ENCODE measurements at regions of chr4 and their contacts with region 1.

Region 1: DNA sequence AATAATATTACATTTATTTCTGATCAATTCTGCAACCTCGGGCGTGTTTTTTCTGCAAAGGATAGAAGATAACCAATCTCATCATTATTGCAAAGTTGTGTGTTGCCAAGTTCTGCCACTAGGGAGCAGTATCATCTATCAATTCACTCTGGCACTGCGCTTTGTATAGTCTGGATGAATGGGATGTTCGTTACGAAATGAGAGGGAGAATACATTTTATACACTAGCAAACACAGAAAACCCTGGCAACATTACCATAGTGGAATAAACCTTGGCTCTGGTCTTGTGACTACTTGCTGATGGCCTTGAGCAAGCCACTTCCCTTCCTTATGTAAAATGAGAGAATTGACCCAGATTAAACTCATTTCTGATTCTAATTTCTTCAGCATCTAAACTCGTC is 97.5 kb upstream of the ZNF518B start:
- DNase-seq: peak in 4 of 5 donors; percentile 28 to 54 (median 38)
- H3K4me3 ChIP-seq: no peak overlapping the region
- H3K27ac ChIP-seq: no peak overlapping the region
- H3K4me1 ChIP-seq: no peaks in the 10 kb centered on the region
- H3K27me3 ChIP-seq: no peaks in the 10 kb centered on the region
- CTCF ChIP-seq: peak in 2 of 3 donors; percentile 46 to 64
- EP300 ChIP-seq: no peak
- POLR2A ChIP-seq: no peak

Region 2: DNA sequence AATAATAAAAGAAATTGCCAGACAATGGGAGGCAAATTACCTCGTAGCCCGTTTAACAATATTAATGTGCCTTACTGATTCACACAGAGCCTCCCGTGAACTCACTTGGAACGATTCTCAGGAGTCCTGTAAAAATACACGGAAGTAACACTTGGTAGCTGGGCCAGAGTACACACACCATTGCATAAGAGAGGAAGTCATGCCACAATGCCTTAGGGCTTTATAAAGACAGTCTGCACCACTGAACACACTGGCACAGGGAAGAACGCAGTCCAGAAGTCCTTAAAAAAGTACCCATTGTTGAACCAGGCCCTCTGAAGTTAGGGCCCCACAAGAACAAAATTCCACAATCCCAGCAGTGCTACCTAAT is 548.5 kb before region 1 on chr4:
- intact Hi-C with region 1: loop called in 1 of 4 experiments (anchors 10 kb)
- DNase-seq: peak in 1 of 5 donors; percentile 27
- H3K4me3 ChIP-seq: no peak overlapping the region
- H3K27ac ChIP-seq: no peak overlapping the region
- H3K4me1 ChIP-seq: peaks cover 4% of the 10 kb centered on the region
- H3K27me3 ChIP-seq: no peaks in the 10 kb centered on the region
- CTCF ChIP-seq: no peak
- EP300 ChIP-seq: no peak
- POLR2A ChIP-seq: no peak

Region 3: DNA sequence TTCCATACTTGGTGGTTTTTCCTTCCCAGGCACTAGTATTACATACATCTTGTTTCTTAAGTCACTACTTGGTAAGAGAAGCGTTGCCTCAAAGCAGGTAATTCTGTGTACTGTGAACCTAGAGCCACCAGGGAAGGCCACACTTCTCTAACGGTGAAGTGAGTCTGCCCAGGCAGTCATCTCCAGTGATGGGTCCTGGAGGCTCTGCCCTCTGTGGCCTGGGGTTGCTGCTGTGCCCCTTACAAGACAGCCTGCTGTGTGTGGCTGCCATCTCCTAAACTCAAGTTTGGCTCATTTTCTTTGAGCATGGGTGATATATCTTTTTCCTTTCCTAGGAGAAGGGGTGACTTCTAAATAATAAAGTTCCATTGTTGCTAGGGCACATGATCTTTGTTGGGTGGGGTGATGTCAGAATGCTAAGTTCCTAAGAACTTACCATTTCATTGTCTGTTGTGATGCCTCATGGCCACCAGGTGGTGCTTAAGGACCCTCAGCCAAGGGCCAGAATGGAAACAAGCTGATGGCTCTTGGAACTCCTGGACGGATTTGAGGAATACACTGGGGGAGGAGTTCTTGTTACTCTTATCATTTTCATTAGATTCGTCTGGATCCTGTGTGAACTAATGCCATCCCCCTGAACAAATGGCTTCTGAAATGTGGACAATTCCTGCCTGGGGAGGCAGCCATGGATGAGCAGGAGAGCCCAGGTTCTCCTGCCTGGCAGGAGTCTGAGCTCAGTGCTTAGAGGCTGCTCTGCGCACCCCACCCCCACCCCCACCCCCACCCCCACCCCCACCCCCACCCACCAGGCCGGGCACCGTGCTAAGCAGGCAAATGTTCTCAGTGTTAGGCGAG is 397.0 kb before region 1 on chr4:
- intact Hi-C with region 1: loop called in 2 of 4 experiments (anchors 5 kb)
- DNase-seq: peak; percentile 19 to 53 (median 35)
- H3K4me3 ChIP-seq: no peak overlapping the region
- H3K27ac ChIP-seq: no peak overlapping the region
- H3K4me1 ChIP-seq: no peaks in the 10 kb centered on the region
- H3K27me3 ChIP-seq: no peaks in the 10 kb centered on the region
- CTCF ChIP-seq: peak in 2 of 3 donors; percentile 44 to 48
- EP300 ChIP-seq: no peak
- POLR2A ChIP-seq: no peak